ENCODE measurements at regions of chr6 and their contacts with region 1.

Region 1: DNA sequence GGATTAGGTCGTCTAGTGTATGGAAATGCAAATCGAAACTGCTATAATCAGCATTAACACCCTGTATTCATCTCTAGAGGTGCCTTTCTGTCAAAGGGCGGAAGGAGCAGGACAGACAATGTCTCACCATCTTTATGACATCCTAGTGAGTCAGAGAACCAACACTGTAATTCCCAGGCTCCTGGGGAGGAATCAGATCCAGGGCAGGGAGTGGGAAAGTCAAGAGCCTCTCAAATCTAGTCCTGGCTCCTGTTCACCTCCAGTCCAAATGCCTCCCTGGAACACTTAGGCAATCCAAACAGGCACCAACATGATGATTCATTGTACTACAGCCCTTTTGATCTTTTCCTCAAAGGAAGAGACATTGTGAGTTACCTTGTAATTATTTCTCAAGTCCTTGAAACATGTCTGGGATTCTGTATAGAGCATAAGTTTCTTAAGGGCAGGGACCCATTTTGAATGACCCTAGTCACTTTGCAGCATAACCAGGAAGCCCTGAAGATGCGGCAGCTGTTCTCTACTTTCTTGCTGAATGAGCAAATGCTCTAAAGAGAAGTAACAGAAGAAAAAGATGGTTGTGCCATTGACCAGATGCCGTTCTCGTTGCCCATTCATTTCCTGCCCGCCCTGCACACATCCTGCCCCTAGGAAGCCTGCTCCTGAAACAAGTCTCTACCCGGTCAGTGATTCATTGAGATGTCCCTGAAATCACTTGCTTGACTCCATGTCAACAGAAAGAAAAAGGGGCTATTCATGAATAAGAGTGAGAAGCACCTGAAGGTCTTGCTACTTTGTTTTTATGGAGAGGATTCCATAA is 112.8 kb upstream of the JARID2 start:
- DNase-seq: no peak
- H3K4me3 Mint-ChIP-seq: no peak overlapping the region
- H3K27ac Mint-ChIP-seq: no peak overlapping the region
- H3K4me1 Mint-ChIP-seq: peaks cover 54% of the 10 kb centered on the region
- H3K27me3 Mint-ChIP-seq: no peaks in the 10 kb centered on the region

Region 2: DNA sequence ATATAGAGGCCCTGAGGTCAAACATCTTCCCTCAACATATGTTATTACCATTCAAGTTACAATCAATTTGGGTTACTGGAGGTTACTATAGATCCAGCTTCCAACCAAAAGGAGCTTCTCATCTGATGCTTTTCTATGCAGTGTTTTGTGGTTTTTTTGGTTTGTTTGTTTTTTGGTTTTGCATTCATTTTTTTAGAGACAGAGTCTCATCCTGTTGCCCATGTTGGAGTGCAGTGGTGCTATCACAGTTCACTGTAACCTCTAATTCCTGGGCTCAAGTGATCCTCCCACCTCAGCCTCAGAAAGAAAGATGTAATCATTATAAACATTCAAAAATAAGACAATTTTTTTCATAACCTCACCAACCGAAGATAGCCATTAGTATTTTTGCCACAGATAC is 11.6 kb before region 1 on chr6:
- intact Hi-C with region 1: loop called (anchors 1 kb)
- DNase-seq: no peak
- H3K4me3 Mint-ChIP-seq: no peak overlapping the region
- H3K27ac Mint-ChIP-seq: no peak overlapping the region
- H3K4me1 Mint-ChIP-seq: peaks cover 10% of the 10 kb centered on the region
- H3K27me3 Mint-ChIP-seq: peaks cover 3% of the 10 kb centered on the region

Region 3: GRCh38 chr6:15184441-15184861 is 51.4 kb after region 1 on chr6:
- intact Hi-C with region 1: loop called (anchors 2 kb)
- DNase-seq: peak; percentile 25
- H3K4me3 Mint-ChIP-seq: no peak overlapping the region
- H3K27ac Mint-ChIP-seq: peak overlapping the region; percentile 94
- H3K4me1 Mint-ChIP-seq: peaks cover 16% of the 10 kb centered on the region
- H3K27me3 Mint-ChIP-seq: no peaks in the 10 kb centered on the region